PC-9 (cell line): ENCODE measurements at regions of chr6 and their contacts with region 1.

Region 1: DNA sequence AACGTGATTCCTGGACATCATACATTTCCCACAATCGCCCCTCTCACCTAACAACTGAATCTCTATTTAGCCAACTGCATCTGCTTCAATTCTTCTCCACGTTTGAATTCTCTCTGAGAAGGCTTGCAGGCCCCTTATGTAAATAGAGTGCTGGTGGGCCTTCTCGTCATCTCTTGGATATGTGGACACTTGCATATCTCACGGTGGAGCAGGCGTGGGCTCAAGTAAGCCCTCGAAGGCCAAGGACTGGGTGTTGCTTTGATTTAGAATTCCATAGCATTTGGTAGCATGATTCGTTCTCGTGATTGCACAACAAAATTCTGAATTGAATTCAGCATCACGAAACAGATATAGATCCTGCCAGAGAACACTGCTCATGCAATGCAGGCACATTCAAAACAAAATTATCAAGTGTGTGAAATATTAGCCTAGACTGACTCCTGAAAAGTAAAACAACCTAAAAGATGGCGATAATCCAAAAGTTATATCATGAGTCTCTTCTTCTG is 613.6 kb downstream of the TFAP2A start:
- DNase-seq: no peak
- H3K4me3 ChIP-seq: no peak overlapping the region
- H3K27ac ChIP-seq: no peak overlapping the region
- H3K4me1 ChIP-seq: no peaks in the 10 kb centered on the region
- H3K27me3 ChIP-seq: no peaks in the 10 kb centered on the region
- CTCF ChIP-seq: no peak

Region 2: GRCh38 chr6:9783567-9783966 is 17.7 kb before region 1 on chr6:
- CTCF ChIA-PET with region 1: no interaction called
- POLR2A ChIA-PET with region 1: no interaction called
- intact Hi-C with region 1: loop called (anchors 1 kb)
- DNase-seq: no peak
- H3K4me3 ChIP-seq: no peak overlapping the region
- H3K27ac ChIP-seq: no peak overlapping the region
- H3K4me1 ChIP-seq: no peaks in the 10 kb centered on the region
- H3K27me3 ChIP-seq: no peaks in the 10 kb centered on the region
- CTCF ChIP-seq: no peak

Region 3: DNA sequence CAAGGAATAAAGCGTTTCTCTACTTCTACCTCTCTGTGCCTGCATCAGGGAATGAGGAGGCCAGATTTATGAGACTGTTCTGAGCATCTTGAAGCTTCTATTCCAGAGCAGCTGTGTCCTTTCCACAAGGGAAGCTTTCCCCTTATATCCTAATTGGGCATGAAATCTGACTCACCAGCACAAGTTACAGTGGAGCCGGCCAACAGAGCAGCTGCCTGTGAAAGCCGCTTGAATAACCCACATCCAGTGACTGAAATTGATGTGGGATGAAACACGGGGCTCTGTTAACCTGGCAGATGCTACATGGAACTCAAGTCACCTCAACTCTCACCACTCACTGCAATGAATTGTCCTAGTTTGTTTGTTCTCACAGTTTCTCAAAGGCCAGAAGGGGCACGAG is 213.3 kb after region 1 on chr6:
- CTCF ChIA-PET with region 1: no interaction called
- POLR2A ChIA-PET with region 1: no interaction called
- intact Hi-C with region 1: no loop called
- DNase-seq: no peak
- H3K4me3 ChIP-seq: no peak overlapping the region
- H3K27ac ChIP-seq: no peak overlapping the region
- H3K4me1 ChIP-seq: no peaks in the 10 kb centered on the region
- H3K27me3 ChIP-seq: no peaks in the 10 kb centered on the region
- CTCF ChIP-seq: no peak